ENCODE measurements at regions of chr4 and their contacts with region 1.

Region 1: GRCh38 chr4:102255454-102255853 is 89.8 kb downstream of the SLC39A8 start:
- DNase-seq: no peak
- H3K4me3 Mint-ChIP-seq: no peak overlapping the region
- H3K27ac Mint-ChIP-seq: no peak overlapping the region
- H3K4me1 Mint-ChIP-seq: peaks cover 5% of the 10 kb centered on the region
- H3K27me3 Mint-ChIP-seq: no peaks in the 10 kb centered on the region

Region 2: DNA sequence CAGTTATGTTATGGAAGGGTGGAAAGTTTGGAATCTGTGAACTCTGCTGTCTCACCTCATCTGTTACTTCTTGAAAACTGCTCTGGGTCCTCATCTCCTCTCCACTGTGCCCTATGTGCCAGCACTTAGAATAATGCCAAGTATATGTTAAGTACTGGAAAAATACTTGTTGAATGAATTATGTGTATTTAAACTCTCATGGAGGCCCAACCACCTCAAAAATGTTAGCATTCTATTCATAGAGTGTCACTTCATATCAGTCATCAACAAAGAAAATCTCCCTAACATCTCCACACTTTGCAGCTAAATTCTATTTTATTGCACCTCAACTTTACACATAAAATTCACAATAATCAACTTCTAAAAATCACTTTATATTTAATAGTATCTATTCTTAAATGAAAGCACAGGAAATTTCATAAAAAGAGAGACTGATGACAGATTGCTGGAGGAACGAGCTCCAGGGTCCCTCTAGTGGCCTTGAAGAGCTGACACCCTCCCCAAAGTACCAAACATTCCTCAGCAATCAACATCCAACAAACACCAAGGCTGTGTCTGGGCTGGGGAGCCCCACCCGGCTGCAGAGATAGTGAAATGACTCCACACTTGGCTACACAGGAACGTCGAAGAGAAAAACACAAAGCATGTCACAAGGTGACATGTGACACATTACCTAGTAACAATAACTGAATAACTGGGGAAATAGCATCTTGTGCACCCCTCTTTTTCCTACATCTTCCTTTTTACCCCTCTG is 44.1 kb after region 1 on chr4:
- intact Hi-C with region 1: loop called (anchors 2 kb)
- DNase-seq: no peak
- H3K4me3 Mint-ChIP-seq: no peak overlapping the region
- H3K27ac Mint-ChIP-seq: no peak overlapping the region
- H3K4me1 Mint-ChIP-seq: peaks cover 8% of the 10 kb centered on the region
- H3K27me3 Mint-ChIP-seq: no peaks in the 10 kb centered on the region

Region 3: DNA sequence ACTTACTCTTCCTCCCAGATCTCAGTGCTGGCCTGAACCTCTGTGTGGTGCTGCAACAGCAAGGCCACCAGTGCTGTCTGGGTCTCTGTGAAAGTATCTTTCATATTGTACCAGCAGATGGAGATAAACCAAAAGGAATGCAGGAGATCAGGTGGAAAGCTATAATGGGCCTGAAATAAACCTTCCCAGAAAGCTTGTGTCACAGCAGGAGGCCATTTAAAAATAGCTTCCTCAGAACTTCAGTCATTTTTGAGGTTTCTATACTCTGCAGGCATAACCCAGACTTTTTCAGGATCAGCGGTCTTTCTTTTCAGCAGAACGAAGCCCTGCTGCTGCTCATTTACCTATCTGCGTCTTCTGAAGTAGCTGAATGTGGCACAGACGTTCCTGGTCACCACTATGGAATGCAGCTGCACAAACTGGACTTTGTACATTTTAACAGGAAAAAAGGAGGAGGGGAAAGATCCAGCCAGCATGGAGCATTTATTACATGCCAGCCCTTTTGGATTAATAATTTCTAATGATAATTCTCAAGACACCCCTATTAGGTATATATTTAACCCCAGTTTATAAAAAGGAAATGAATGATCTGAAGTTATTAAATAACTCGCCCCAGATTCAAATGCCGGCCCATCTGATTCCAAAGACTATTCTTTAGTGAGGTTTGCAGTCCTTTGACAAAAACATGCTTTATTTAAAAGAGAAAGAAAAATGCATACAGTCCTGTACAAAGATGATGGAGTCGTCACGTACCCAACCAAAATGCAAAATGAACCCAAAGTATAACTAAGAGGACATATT is 365.4 kb after region 1 on chr4:
- intact Hi-C with region 1: loop called (anchors 5 kb)
- DNase-seq: no peak
- H3K4me3 Mint-ChIP-seq: no peak overlapping the region
- H3K27ac Mint-ChIP-seq: peak overlapping the region; percentile 58
- H3K4me1 Mint-ChIP-seq: peaks cover 49% of the 10 kb centered on the region
- H3K27me3 Mint-ChIP-seq: no peaks in the 10 kb centered on the region

Measured in activated T-helper 2 cell treated with anti-CD3 and anti-CD28 coated beads, Interferon-gamma antibody, Interleukin-2, Interleukin-4, amounts not matched to agents 10 μg/mL and 5 μg/mL and 100 μg/mL, durations not matched to agents 14 hours and 24 hours and 36 hours (primary cell).